Motor neuron (in vitro differentiated cells): ENCODE measurements at regions of chr1 and their contacts with region 1.

Region 1: GRCh38 chr1:101520302-101520701 is 283.5 kb downstream of the S1PR1 start:
- ATAC-seq: peak; percentile 63 to 95 (median 78)
- H3K4me3 ChIP-seq: no peak overlapping the region
- H3K27ac ChIP-seq: no peak overlapping the region
- H3K4me1 ChIP-seq: no peaks in the 10 kb centered on the region

Region 2: DNA sequence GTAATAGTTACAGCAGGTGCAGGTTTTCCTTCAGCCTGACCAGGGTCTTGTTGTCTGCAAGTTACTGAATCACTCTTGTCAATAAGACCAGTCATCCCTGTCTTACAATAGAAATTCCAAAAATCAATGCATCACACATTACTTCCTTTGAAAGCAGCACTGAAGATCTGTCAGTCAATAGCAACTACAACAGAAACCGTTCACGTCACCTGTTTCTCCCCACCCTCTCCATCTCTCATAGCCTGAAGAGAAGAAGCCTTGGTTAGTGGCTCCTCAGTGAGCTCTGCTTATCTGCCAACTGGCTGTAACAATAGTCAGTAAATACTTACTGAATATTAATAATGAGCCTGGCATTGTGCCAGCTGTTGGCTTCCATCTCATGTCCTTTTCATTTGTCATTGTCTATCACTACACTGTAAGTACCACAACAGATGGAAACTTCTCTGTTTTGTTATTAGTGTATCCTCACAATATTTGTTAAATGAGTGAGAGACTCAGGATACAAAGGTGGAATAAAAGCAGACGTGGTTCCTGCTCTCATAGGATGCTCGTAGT is 88.3 kb before region 1 on chr1:
- in situ Hi-C with region 1: no loop called
- ATAC-seq: no peak
- H3K4me3 ChIP-seq: no peak overlapping the region
- H3K27ac ChIP-seq: no peak overlapping the region
- H3K4me1 ChIP-seq: peaks cover 0 to 22% of the 10 kb centered on the region in 2 donors

Region 3: DNA sequence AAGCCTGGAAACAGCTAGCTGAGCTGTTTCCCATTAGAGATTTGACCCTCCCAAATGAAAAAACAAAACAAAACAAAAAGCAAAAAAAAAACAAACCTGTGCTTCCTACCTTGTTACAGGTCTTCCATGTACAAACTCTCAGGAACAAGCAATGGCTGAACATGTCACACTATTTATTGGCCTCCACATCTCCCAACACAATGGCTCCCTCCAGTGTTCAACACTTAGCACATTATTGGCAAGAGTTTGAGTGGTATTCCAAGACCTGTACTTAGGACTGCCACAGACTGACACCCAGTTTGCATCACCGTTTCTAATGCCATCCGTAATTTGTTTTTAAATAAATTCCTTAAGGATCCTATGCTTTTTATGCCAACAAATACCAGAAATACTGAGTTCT is 671.4 kb after region 1 on chr1:
- in situ Hi-C with region 1: loop called in 1 of 9 experiments (anchors 25 kb)
- ATAC-seq: peak; percentile 46 to 90 (median 75)
- H3K4me3 ChIP-seq: no peak overlapping the region
- H3K27ac ChIP-seq: no peak overlapping the region
- H3K4me1 ChIP-seq: no peaks in the 10 kb centered on the region

Region 4: DNA sequence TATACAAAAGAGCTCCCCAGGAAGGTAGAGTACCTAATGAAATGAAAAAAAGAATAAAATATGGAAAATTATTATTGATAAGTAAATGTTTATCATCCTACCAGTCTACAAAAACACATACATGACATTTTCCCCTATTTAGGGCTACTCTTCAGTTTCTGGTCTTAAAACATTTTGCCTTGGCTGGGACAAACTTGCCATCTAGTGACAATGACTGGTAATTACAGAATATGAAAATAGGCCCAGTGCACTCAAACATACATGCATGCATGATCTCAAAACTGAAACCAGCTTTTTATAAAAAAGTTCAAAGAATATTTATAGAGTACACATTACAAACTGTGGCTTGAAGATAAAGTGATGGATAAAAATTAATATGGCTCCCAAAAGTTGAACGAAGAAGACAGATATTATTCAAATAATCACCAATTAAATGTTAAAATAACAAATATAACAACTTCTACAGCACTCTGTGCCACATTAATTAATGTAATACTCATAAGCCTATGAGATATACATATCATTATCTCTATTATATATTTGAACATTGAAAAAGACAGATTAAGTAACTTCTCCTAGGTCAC is 1994.7 kb after region 1 on chr1:
- in situ Hi-C with region 1: loop called in 1 of 9 experiments (anchors 25 kb)
- ATAC-seq: peak in 7 of 8 experiments; percentile 38 to 66 (median 48)
- H3K4me3 ChIP-seq: no peak overlapping the region
- H3K27ac ChIP-seq: no peak overlapping the region
- H3K4me1 ChIP-seq: no peaks in the 10 kb centered on the region